CD4-positive, alpha-beta T cell (primary cell): ENCODE measurements at regions of chr10 and their contacts with region 1.

Region 1: DNA sequence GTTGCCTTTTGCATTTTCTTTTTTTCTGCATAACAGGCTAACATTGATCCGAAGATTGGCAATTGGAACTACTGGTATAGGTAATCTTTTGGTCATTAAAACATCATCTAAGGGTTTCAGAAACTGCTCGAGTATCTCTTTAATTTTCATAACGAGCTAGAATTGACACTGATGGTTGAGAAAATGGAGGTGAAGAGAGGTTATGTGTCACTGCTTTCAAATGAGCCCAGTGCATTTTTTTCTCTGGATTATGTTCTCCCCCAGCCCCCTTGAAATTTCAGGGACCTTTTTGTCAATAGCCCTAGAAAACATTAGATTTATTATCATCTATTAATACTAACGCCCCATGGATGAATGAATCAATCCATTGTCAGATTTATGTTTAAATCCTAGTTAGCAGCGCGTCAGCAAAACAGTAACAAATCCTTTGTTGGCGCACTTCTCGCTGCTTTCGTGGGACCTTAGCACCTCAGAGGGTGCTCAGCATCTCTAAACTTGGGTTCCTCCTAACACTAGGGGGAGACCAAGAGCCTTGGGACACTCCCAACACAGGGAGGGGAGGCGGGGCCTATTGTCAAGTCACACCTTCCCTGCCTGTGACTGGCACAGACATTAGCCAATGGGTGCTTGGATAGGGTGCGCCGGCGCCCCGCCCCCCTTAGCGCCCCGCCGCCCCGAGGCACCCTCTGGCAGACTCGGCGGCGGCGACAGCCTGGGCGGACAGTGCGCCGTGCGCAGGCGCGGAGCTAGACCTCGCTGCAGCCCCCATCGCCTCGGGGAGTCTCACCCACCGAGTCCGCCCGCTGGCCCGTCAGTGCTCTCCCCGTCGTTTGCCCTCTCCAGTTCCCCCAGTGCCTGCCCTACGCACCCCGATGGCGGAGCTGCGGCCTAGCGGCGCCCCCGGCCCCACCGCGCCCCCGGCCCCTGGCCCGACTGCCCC is at the start of gene SUFU:
- DNase-seq: peak; percentile 94 to 100 (median 98)
- ATAC-seq: peak; percentile 67
- H3K4me3 ChIP-seq: peak within 1 kb of the TSS; percentile 100
- H3K4me3 Mint-ChIP-seq: no peak within 1 kb of the TSS
- H3K27ac ChIP-seq: peak within 1 kb of the TSS; percentile 80 to 97
- H3K27ac Mint-ChIP-seq: no peak within 1 kb of the TSS
- H3K4me1 ChIP-seq: peaks cover 44% of the 10 kb centered on the region
- H3K4me1 Mint-ChIP-seq: peaks cover 46% of the 10 kb centered on the region
- H3K27me3 ChIP-seq: no peaks in the 10 kb centered on the region
- H3K27me3 Mint-ChIP-seq: no peaks in the 10 kb centered on the region
- CTCF ChIP-seq: peak; percentile 88
- total RNA-seq, gene SUFU: 6.7 to 7.3 TPM

Region 2: DNA sequence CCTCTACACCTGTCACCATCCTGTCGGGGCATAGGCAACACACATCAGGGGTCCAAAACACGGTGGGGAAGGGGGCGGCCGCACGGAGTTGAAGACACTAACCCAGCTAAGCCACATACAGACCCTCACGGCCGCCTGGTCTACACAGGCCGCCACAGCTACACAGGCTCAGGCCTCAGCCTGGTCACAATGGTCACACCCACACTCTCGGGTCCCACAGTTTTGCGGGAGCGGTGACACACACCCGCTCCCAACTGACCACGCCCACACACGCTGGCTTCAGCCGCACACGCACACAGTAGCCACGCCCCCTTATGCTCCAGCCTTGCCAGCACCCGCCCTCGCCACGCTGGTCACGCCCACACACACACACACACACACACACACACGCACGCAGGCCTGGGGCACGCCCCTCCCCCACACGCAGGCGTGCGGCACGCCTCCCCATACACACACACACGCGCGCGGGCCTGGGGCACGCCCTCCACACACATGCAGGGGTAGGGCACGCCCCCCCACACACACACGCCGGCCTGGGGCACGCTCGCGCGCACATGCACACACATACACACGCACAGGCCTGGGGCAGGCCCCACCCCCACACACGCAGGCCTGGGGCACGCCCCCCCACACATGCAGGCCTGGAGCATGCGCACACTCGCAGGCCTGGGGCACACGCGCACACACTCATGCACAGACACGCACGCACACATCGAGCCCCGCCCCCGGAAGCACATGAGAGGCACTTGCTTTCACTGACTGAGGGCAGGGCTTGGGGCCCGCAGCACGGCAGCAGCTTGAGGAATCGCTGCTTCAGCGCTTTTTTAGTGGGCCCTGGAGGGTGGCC is 673.0 kb before region 1 on chr10:
- CTCF ChIA-PET with region 1: no interaction called
- POLR2A ChIA-PET with region 1: no interaction called
- intact Hi-C with region 1: loop called in 1 of 2 experiments (anchors 10 kb)
- DNase-seq: peak; percentile 91 to 99 (median 94)
- ATAC-seq: peak; percentile 79
- H3K4me3 ChIP-seq: peak overlapping the region; percentile 63
- H3K4me3 Mint-ChIP-seq: peak overlapping the region; percentile 94
- H3K27ac ChIP-seq: peak overlapping the region; percentile 76 to 85
- H3K27ac Mint-ChIP-seq: peak overlapping the region; percentile 99
- H3K4me1 ChIP-seq: peaks cover 69% of the 10 kb centered on the region
- H3K4me1 Mint-ChIP-seq: peaks cover 55% of the 10 kb centered on the region
- H3K27me3 ChIP-seq: no peaks in the 10 kb centered on the region
- H3K27me3 Mint-ChIP-seq: peaks cover 5% of the 10 kb centered on the region
- CTCF ChIP-seq: no peak

Region 3: DNA sequence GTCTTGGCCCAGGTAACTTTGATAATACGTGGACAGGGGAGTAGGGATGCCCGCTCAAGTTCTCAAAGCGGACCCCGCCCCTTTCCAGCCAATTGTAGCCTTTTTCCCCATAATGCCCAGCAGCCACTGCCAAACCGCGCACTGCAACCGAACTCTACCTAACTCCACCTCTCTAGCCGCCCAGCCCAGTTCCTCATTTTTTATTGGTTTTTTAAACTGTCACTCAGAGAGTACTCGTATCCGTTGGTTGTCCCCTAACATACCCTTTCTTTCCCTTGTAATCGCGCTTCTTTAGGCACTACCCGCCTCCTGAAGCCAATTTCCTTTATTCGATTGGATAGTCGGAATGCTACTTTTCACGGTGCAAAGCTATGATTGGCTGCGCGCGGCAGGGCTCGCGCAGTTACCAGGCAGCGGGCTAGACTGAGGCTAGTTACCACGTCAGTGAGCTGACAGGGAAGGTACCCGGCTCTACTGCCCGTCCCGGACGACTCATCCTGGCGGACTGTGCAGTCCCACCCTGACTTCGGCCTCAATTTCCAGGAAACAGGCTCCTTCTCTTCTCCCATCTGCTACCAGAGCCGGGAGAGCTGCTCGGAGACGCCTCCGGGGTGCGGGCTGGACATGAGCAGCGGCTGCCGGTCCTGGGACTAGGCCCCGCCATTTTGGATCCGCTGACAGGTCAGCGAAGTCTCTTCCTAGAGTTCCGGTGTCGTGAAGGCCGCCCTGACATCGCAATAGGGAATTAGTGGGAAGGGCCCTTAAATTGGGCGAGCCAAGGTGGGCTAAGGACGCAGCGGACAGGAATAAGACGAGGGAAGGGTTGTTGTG is 258.2 kb before region 1 on chr10 and contains the start of gene GBF1:
- CTCF ChIA-PET with region 1: no interaction called
- POLR2A ChIA-PET with region 1: interaction called, 6 read pairs
- intact Hi-C with region 1: loop called in 1 of 2 experiments (anchors 5 kb)
- DNase-seq: peak; percentile 76 to 99 (median 84)
- ATAC-seq: peak; percentile 89
- H3K4me3 ChIP-seq: peak within 1 kb of the TSS; percentile 74
- H3K4me3 Mint-ChIP-seq: peak within 1 kb of the TSS; percentile 96
- H3K27ac ChIP-seq: peak within 1 kb of the TSS; percentile 84 to 88
- H3K27ac Mint-ChIP-seq: peak within 1 kb of the TSS; percentile 86
- H3K4me1 ChIP-seq: peaks cover 60% of the 10 kb centered on the region
- H3K4me1 Mint-ChIP-seq: peaks cover 58% of the 10 kb centered on the region
- H3K27me3 ChIP-seq: peaks cover 20 to 28% of the 10 kb centered on the region in 2 experiments
- H3K27me3 Mint-ChIP-seq: peaks cover 40% of the 10 kb centered on the region
- CTCF ChIP-seq: no peak
- total RNA-seq, gene GBF1: 28.8 to 30.9 TPM

Region 4: DNA sequence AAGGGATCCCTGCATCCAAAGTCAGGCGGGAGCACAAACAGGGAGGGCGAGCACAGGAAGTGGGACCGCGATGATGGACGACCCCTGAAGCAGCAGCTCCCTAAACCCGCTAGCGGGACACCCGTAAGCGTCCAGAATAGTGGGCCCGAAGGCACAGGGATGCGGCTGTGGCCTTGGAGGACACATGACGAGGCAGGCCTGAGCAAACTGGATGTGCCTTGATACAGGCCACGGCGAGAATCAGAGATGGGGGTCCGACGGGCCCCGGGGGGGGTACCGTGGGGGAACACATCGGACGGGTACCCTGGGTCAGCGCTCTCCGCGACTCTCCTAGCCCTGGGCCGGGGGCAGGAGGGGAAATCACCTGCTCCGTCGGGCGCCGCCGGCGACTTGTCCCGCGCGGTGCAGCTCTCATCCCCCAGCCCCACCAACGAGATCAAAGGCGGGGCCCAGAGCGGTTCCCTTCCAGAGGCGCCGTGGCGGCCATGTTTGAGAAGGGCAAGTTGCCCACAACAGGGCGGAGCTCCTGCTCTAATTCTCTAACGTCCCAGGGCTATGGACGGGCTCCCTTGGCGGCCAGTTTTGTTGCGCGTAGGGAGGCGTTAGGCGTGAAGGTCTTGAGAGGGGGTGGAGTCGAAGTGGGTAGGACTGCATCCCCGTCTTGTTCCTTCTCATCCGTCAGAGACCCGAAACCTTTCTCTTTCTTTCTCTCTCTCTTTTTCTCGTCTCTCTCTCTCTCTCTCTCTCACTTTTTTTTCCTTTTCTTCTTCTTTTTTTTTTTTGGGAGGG is 71.2 kb before region 1 on chr10 and contains the start of gene CUEDC2:
- CTCF ChIA-PET with region 1: interaction called, 3 read pairs
- POLR2A ChIA-PET with region 1: interaction called, 9 read pairs
- intact Hi-C with region 1: loop called in 1 of 2 experiments (anchors 5 kb)
- DNase-seq: peak; percentile 90 to 97 (median 96)
- ATAC-seq: peak; percentile 93
- H3K4me3 ChIP-seq: peak within 1 kb of the TSS; percentile 72
- H3K4me3 Mint-ChIP-seq: peak within 1 kb of the TSS; percentile 95
- H3K27ac ChIP-seq: peak within 1 kb of the TSS; percentile 23 to 37
- H3K27ac Mint-ChIP-seq: peak within 1 kb of the TSS; percentile 92
- H3K4me1 ChIP-seq: peaks cover 57% of the 10 kb centered on the region
- H3K4me1 Mint-ChIP-seq: peaks cover 56% of the 10 kb centered on the region
- H3K27me3 ChIP-seq: no peaks in the 10 kb centered on the region
- H3K27me3 Mint-ChIP-seq: no peaks in the 10 kb centered on the region
- CTCF ChIP-seq: no peak
- total RNA-seq, gene CUEDC2: 25.5 to 25.6 TPM

Region 5: GRCh38 chr10:102583435-102584417 is 80.2 kb after region 1 on chr10:
- CTCF ChIA-PET with region 1: interaction called, 9 read pairs
- POLR2A ChIA-PET with region 1: interaction called, 22 read pairs
- intact Hi-C with region 1: loop called (anchors 1 kb)
- DNase-seq: peak; percentile 71 to 90 (median 78)
- ATAC-seq: peak; percentile 99
- H3K4me3 ChIP-seq: no peak overlapping the region
- H3K4me3 Mint-ChIP-seq: no peak overlapping the region
- H3K27ac ChIP-seq: no peak overlapping the region
- H3K27ac Mint-ChIP-seq: peak overlapping the region; percentile 28
- H3K4me1 ChIP-seq: peaks cover 10% of the 10 kb centered on the region
- H3K4me1 Mint-ChIP-seq: peaks cover 16% of the 10 kb centered on the region
- H3K27me3 ChIP-seq: no peaks in the 10 kb centered on the region
- H3K27me3 Mint-ChIP-seq: no peaks in the 10 kb centered on the region
- CTCF ChIP-seq: peak; percentile 90

Region 6: GRCh38 chr10:102713814-102714620 is 210.5 kb after region 1 on chr10 and contains the start of gene ARL3:
- CTCF ChIA-PET with region 1: no interaction called
- POLR2A ChIA-PET with region 1: interaction called, 6 read pairs
- intact Hi-C with region 1: loop called (anchors 2 kb)
- DNase-seq: peak; percentile 82 to 98 (median 92)
- ATAC-seq: peak; percentile 89
- H3K4me3 ChIP-seq: peak within 1 kb of the TSS; percentile 98
- H3K4me3 Mint-ChIP-seq: peak within 1 kb of the TSS; percentile 93
- H3K27ac ChIP-seq: peak within 1 kb of the TSS; percentile 84 to 86
- H3K27ac Mint-ChIP-seq: peak within 1 kb of the TSS; percentile 81
- H3K4me1 ChIP-seq: peaks cover 34% of the 10 kb centered on the region
- H3K4me1 Mint-ChIP-seq: peaks cover 61% of the 10 kb centered on the region
- H3K27me3 ChIP-seq: no peaks in the 10 kb centered on the region
- H3K27me3 Mint-ChIP-seq: no peaks in the 10 kb centered on the region
- CTCF ChIP-seq: peak; percentile 46
- total RNA-seq, gene ARL3: 0.99 to 1.3 TPM

Region 7: GRCh38 chr10:102917962-102918816 is 414.6 kb after region 1 on chr10 and contains the start of gene CNNM2:
- CTCF ChIA-PET with region 1: no interaction called
- POLR2A ChIA-PET with region 1: no interaction called
- intact Hi-C with region 1: loop called in 1 of 2 experiments (anchors 2 kb)
- DNase-seq: peak; percentile 98 to 100 (median 100)
- ATAC-seq: peak; percentile 88
- H3K4me3 ChIP-seq: peak within 1 kb of the TSS; percentile 92
- H3K4me3 Mint-ChIP-seq: peak within 1 kb of the TSS; percentile 98
- H3K27ac ChIP-seq: peak within 1 kb of the TSS; percentile 91
- H3K27ac Mint-ChIP-seq: peak within 1 kb of the TSS; percentile 90
- H3K4me1 ChIP-seq: peaks cover 34% of the 10 kb centered on the region
- H3K4me1 Mint-ChIP-seq: peaks cover 59% of the 10 kb centered on the region
- H3K27me3 ChIP-seq: peaks cover 3 to 8% of the 10 kb centered on the region in 2 experiments
- H3K27me3 Mint-ChIP-seq: peaks cover 22% of the 10 kb centered on the region
- CTCF ChIP-seq: no peak
- total RNA-seq, gene CNNM2: 8.4 to 8.9 TPM